GM12878 (cell line): ENCODE measurements at regions of chr17 and their contacts with region 1.

Region 1: DNA sequence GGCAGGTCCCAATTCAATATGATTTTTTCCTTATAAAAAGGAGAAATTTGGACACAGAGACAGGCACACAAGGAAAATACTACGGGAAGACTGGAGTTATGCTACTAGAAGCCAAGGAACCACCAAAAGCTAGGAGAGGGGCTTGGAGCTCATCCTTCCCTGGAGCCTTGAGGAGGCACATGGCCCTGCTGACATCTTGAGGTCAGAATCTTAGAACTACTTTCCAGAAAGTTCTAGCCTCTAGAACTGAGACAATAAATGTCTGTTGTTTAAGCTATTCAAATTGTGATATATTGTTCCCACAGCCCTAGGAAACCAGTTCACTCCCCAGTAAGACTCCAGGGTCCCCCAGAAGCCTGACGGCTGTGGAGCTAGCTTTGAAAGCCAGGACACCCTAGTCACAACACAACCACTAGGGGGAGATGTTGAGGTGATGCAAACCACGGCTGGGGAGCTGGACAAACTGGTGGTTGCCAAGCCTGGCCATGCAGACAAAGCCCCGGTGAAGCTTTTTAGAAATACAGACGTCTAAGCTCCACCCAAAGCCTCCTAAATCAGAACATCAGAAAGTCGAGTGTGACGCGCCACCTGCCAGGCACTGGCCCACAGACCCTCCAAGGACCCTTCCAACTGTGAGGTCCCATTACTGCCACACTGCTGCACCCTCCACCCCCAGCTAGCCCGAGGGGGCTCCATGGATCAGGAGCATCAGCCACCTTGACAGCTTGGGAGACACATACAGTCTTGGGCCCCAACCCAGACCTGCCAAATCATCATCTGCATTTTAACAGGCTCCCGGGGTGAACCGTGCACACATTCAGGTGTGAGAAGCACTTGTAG is 106.4 kb downstream of the SLC39A11 start:
- DNase-seq: peak; percentile 47
- ATAC-seq: peak; percentile 99
- H3K4me3 ChIP-seq: no peak overlapping the region
- H3K27ac ChIP-seq: no peak overlapping the region; the same call in 1 of the 2 replicates
- H3K4me1 ChIP-seq: peaks cover 10% of the 10 kb centered on the region
- H3K27me3 ChIP-seq: no peaks in the 10 kb centered on the region
- CTCF ChIP-seq: peak; percentile 84 to 88 (median 88)
- EP300 ChIP-seq: no peak
- POLR2A ChIP-seq: no peak
- RAD21 ChIP-seq: peak; percentile 81

Region 2: DNA sequence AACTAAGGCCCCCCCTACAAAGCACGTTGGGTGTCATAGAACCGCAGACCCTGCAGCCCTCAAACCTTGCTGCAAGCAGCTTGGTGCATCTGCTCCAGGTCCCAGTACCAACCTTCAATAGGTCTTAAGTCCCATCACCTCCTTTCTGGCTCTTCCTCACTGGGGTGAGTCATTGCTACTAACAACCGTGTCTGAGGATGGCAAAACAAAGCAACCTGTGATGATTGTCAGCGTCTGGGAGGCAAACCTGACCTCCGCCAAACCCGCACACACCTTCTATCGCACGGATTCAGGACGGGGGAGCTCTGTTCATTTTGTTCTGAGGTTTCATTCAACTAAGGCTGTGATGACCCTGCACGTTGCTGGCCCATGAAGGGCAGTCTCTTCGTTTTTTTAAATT is 32.5 kb before region 1 on chr17:
- CTCF ChIA-PET with region 1: interaction called, 23 read pairs
- POLR2A ChIA-PET with region 1: no interaction called
- RAD21 ChIA-PET with region 1: no interaction called
- SMC1A ChIA-PET with region 1: interaction called, 7 read pairs
- in situ Hi-C with region 1: no loop called
- intact Hi-C with region 1: no loop called
- DNase-seq: no peak
- ATAC-seq: no peak
- H3K4me3 ChIP-seq: no peak overlapping the region
- H3K27ac ChIP-seq: no peak overlapping the region
- H3K4me1 ChIP-seq: no peaks in the 10 kb centered on the region
- H3K27me3 ChIP-seq: no peaks in the 10 kb centered on the region
- CTCF ChIP-seq: no peak
- EP300 ChIP-seq: no peak
- POLR2A ChIP-seq: no peak
- RAD21 ChIP-seq: no peak

Region 3: GRCh38 chr17:73092523-73093135 is 106.5 kb after region 1 on chr17 and contains the start of gene SLC39A11:
- CTCF ChIA-PET with region 1: interaction called, 14 read pairs
- POLR2A ChIA-PET with region 1: no interaction called
- RAD21 ChIA-PET with region 1: interaction called, 4 read pairs
- SMC1A ChIA-PET with region 1: no interaction called
- in situ Hi-C with region 1: no loop called
- intact Hi-C with region 1: no loop called
- DNase-seq: peak; percentile 67
- ATAC-seq: peak; percentile 98
- H3K4me3 ChIP-seq: peak within 1 kb of the TSS; percentile 99
- H3K27ac ChIP-seq: peak within 1 kb of the TSS; percentile 68
- H3K4me1 ChIP-seq: peaks cover 7% of the 10 kb centered on the region; the same call in 1 of the 2 replicates
- H3K27me3 ChIP-seq: no peaks in the 10 kb centered on the region
- CTCF ChIP-seq: no peak
- EP300 ChIP-seq: no peak
- POLR2A ChIP-seq: peak; percentile 94
- RAD21 ChIP-seq: no peak
- polyA plus RNA-seq, gene SLC39A11: 8.6 to 11.7 TPM

Region 4: DNA sequence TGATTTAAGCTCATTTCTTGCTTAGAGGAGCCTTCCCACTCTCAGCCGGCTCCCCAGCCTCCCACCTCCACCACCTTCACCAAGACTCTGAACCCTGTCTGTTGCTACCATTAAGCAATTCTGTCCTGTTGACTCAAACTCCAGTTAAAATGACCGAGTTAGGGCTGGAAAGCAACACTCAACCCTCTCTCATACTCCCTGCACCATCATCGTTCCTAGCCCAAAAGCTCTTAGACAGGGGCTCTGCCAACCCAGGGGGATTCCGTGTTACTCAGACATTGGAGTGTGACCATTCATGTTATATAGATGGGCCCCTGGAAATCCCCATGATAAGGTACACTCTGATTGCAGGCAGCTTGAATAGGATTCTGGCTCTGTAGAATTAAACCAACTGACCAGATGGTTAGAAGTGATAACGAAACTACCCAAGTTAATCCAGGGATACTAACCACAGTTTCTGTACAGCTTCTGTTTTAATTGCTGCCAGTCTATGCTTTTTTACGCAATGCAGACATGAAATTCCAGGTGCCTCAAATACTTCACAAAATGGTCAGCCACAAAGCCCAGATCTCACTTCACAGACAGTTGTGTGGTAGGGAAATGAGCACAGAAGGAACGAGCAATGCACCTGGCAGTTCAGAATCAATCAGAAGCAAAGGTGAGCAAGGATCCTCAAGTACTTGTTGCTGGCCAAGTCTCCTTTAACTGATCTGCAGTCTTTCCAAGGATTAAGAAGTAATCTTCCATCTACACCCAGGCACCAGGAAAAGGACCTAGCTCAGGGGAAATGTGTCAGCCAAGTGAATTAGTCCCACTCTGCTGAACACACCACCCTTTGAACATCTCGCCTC is 180.9 kb after region 1 on chr17:
- CTCF ChIA-PET with region 1: interaction called, 19 read pairs
- POLR2A ChIA-PET with region 1: interaction called, 6 read pairs
- RAD21 ChIA-PET with region 1: interaction called, 12 read pairs
- SMC1A ChIA-PET with region 1: interaction called, 23 read pairs
- in situ Hi-C with region 1: no loop called
- intact Hi-C with region 1: no loop called
- DNase-seq: no peak
- ATAC-seq: peak; percentile 71
- H3K4me3 ChIP-seq: peak overlapping the region; percentile 82
- H3K27ac ChIP-seq: peak overlapping the region; percentile 51
- H3K4me1 ChIP-seq: peaks cover 34% of the 10 kb centered on the region
- H3K27me3 ChIP-seq: 0 out of 4 replicates have a peak, but pooled peaks cover 0 to 3% of the 10 kb centered on the region in 2 experiments
- CTCF ChIP-seq: no peak
- EP300 ChIP-seq: peak in 1 of 2 experiments; percentile 30; a peak in 1 of 4 replicates
- POLR2A ChIP-seq: no peak
- RAD21 ChIP-seq: no peak